ENCODE measurements at regions of chr7 and their contacts with region 1.

Region 1: DNA sequence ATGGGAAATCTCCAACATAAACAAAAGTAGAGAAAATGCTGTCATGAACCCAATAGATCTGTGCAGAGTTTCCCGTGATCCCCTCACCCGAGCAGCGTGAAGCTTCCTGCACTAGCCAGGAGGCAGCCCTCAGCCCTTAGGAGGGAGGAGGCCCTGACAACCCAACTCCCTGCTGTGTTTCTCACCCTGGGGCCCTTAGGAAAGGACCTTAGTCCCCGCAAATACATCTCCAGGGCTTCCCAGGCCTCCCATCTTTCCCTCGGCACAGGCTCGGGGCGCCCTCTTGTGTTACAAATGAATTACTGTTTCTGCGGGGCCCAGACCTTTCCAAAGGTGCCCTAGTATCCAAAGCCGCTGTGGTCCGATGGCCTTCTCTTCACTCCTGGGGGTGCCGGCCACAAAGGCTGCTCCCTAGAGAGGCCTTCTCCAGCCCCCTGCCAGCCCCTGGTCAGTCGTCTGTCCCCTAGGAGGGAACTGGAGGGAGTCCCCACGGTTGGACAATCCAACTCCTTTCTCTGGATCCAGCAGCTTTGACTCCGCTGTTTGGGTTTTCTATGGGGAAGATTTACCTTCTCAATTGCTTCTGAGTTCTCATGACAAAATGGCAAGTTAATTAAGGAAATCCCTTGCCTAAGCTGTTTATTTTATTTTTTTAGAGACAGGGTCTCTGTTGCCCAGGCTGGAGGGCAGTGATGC is 49.9 kb upstream of the SH2B2 start:
- DNase-seq: peak; percentile 61 to 82
- ATAC-seq: peak; percentile 79
- H3K4me3 ChIP-seq: no peak overlapping the region
- H3K27ac ChIP-seq: no peak overlapping the region
- H3K4me1 ChIP-seq: no peaks in the 10 kb centered on the region
- H3K27me3 ChIP-seq: no peaks in the 10 kb centered on the region

Region 2: GRCh38 chr7:101468546-101468945 is 768.2 kb before region 1 on chr7:
- intact Hi-C with region 1: no loop called
- DNase-seq: no peak
- ATAC-seq: no peak
- H3K4me3 ChIP-seq: no peak overlapping the region
- H3K27ac ChIP-seq: no peak overlapping the region
- H3K4me1 ChIP-seq: no peaks in the 10 kb centered on the region
- H3K27me3 ChIP-seq: no peaks in the 10 kb centered on the region

Region 3: GRCh38 chr7:101542527-101543241 is 694.1 kb before region 1 on chr7:
- intact Hi-C with region 1: loop called in 1 of 2 experiments (anchors 10 kb)
- DNase-seq: peak in 1 of 2 donors; percentile 86
- ATAC-seq: peak; percentile 59
- H3K4me3 ChIP-seq: no peak overlapping the region
- H3K27ac ChIP-seq: no peak overlapping the region
- H3K4me1 ChIP-seq: no peaks in the 10 kb centered on the region
- H3K27me3 ChIP-seq: no peaks in the 10 kb centered on the region

Region 4: DNA sequence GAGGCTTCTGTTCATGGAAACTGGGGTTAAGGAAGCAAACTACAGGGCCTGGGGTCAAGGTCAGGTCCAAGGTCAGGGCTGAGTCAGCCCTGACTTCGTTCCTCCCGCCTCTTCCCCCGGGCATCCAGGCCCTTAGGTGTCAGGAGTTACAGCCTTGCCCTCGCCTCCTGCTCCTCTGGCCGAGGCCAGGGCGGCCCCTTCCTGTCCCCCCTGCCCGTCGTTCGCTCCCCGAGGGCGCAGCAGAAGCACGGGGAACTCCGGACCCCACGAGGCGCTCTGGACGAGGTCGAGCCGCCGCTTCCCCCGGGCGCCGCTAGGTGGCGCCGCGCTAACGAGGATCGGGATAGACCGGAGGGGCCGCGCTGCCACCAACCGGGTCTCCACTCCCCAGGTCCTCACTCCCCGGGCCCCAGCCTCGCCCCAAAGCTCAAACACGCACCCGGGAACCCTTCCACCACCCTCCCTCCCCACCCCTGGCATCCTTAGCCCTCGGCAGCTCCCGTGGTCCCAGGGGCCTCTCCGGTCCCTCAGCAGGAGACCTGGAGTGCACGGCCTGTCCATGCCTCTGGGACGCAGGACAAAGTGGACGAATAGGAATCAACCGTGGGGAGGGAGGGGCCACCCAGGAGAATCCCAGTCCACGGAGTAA is 548.4 kb before region 1 on chr7:
- intact Hi-C with region 1: loop called (anchors 1 to 10 kb)
- DNase-seq: peak; percentile 85 to 96
- ATAC-seq: peak; percentile 91
- H3K4me3 ChIP-seq: no peak overlapping the region
- H3K27ac ChIP-seq: no peak overlapping the region
- H3K4me1 ChIP-seq: no peaks in the 10 kb centered on the region
- H3K27me3 ChIP-seq: no peaks in the 10 kb centered on the region

Region 5: GRCh38 chr7:102140952-102141370 is 95.8 kb before region 1 on chr7:
- intact Hi-C with region 1: no loop called
- DNase-seq: peak in 1 of 2 donors; percentile 64
- ATAC-seq: no peak
- H3K4me3 ChIP-seq: no peak overlapping the region
- H3K27ac ChIP-seq: no peak overlapping the region
- H3K4me1 ChIP-seq: no peaks in the 10 kb centered on the region
- H3K27me3 ChIP-seq: no peaks in the 10 kb centered on the region